Vagina (tissue), 2 donors: ENCODE measurements at regions of chr1 and their contacts with region 1.

Region 1: DNA sequence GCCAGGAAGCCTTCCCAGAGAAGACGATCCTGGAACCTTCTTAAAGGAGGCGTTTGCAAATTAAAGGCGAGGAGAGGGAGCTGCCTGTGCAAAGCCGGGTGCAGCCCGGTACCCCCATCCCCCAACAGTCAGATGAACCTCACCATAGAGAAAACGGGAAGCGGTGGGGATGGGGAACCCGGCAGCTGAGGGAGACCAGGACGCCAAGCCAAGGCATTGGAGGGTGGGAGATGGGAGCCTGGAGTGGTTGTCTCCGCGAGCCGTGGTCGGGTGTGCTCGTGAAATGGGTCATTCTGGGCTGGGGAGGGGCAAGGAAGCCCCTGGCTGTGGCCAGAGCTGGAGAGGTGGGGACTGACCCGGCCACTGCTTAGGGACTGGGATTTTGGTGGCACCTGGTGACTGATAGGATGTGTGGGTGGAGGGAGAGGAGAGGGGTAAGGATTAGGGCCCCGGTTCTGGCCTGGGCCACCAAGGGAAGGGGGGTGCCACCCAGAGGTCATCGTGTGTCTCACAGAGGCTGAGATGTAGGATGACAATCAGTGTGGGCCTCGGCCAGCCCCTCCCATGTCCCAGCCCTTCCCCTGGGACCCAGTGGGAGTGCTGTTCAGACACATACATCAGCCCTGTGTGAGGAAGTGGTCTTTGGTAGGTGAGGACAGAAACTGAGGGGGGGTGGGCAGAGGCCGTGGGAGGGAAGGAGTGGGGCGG is 676 bp upstream of the PADI2 start:
- DNase-seq: no peak
- H3K4me3 ChIP-seq: peak overlapping the region; percentile 28 to 35
- H3K27ac ChIP-seq: no peak overlapping the region
- H3K4me1 ChIP-seq: peaks cover 17% of the 10 kb centered on the region
- H3K27me3 ChIP-seq: no peaks in the 10 kb centered on the region
- CTCF ChIP-seq: no peak
- POLR2A ChIP-seq: no peak

Region 2: DNA sequence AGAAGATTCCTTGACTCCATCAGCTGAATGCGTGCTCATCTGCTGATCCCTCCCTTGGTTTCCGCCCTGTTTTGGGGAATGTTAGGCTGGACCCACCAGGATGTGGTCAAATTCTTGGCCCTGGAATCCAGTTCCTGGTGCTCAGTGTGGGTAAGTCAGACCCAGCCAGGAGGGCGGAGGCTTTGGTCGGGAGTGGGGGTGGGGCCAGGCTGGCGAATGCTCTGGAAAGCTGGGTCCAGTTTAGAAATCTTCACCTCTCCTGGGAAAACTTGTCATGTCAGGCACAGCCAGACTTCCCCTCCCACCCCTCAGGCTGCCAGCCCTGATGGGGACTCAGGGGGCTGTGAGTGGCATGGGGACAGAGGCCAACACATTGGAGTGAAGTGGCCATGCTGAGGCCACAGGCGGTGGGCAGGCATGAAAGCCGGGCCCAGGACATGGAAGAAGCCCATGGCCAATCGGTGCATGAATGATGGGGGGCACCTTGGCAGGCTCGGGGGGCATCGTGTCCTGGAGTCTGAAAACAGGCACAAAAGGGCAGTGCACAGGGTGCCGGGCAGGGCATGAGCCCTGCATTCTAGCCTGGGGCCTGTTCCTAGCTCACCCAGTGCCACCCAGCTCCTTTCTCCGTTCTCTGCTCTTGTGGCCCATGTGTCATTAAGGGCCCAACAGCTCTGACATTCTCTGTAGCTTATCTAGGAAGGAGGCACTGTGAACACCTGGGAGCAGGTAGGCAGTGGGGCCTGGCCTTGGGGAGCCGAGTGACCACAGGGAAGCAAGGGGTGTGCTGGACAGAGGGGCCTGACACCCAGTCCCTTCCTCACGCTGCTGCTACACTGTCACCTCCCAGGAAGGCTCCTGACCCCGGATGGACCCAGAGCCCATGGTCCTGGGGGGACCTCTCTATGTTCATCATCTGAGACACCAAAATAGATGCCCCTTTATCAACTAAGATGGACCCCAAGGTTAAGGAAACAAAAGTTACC is 70.4 kb after region 1 on chr1:
- intact Hi-C with region 1: no loop called
- DNase-seq: peak in 1 of 2 donors; percentile 93
- H3K4me3 ChIP-seq: no peak overlapping the region
- H3K27ac ChIP-seq: no peak overlapping the region
- H3K4me1 ChIP-seq: peaks cover 11% of the 10 kb centered on the region
- H3K27me3 ChIP-seq: no peaks in the 10 kb centered on the region
- CTCF ChIP-seq: no peak
- POLR2A ChIP-seq: no peak

Region 3: DNA sequence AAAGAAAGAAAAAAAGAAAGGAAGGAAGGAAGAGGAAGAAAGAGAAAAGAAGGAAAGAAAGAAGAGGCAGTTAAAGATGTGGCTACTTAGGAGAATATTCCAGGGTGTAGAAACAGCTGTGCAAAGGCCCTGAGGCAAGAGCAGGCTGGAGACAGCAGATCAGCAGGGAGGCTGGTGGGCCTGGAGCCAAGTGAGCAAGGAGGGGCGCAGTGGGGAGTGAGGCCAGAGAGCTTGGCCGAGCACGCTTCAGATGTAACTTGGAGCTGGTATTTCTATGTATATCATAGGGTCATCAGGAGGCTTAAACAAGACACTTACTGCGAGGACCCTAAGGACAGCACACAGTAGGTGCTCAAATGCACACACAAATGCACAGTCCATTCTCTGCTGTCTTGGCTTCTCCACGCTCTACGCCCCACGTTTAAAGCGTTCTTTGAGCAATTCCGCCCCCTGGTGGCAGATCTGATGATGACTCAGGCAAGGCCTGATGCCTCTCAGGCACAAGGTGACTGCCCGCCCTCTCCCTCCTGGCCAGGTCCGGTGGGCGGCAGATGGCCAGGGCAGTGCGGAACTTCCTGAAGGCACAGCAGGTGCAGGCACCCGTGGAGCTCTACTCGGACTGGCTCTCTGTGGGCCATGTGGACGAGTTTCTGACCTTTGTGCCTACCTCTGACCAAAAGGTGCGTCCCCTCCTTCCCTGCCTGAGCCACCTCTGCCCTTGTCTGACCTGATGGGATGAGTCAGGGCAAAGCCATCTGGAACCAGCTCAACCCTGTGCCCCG is 117.0 kb after region 1 on chr1:
- intact Hi-C with region 1: loop called (anchors 5 kb)
- DNase-seq: no peak
- H3K4me3 ChIP-seq: no peak overlapping the region
- H3K27ac ChIP-seq: no peak overlapping the region
- H3K4me1 ChIP-seq: peaks cover 14% of the 10 kb centered on the region
- H3K27me3 ChIP-seq: no peaks in the 10 kb centered on the region
- CTCF ChIP-seq: peak; percentile 78 to 80 (median 80)
- POLR2A ChIP-seq: no peak

Region 4: GRCh38 chr1:18883636-18884418 is 1763.9 kb after region 1 on chr1:
- intact Hi-C with region 1: no loop called
- DNase-seq: no peak
- H3K4me3 ChIP-seq: no peak overlapping the region
- H3K27ac ChIP-seq: no peak overlapping the region
- H3K4me1 ChIP-seq: peaks cover 27% of the 10 kb centered on the region
- H3K27me3 ChIP-seq: no peaks in the 10 kb centered on the region
- CTCF ChIP-seq: peak; percentile 48 to 76 (median 68)
- POLR2A ChIP-seq: no peak